Gastrocnemius medialis (tissue), 4 donors: ENCODE measurements at regions of chr5 and their contacts with region 1.

Region 1: GRCh38 chr5:172770675-172771438 is at the start of gene DUSP1:
- DNase-seq: peak; percentile 99
- ATAC-seq: peak; percentile 34 to 42
- H3K4me3 ChIP-seq: peak within 1 kb of the TSS; percentile 66 to 98 (median 83)
- H3K27ac ChIP-seq: peak within 1 kb of the TSS; percentile 96 to 99 (median 96)
- H3K4me1 ChIP-seq: peaks cover 39 to 42% of the 10 kb centered on the region in 2 donors
- H3K27me3 ChIP-seq: no peaks in the 10 kb centered on the region
- CTCF ChIP-seq: peak; percentile 32 to 77 (median 40)
- POLR2A ChIP-seq: peak in 1 of 2 donors; percentile 100
- total RNA-seq, gene DUSP1: 345 to 1,004 (median 793) TPM

Region 2: GRCh38 chr5:172795318-172795977 is 24.6 kb after region 1 on chr5:
- in situ Hi-C with region 1: no loop called
- intact Hi-C with region 1: loop called (anchors 1 kb)
- DNase-seq: peak; percentile 94 to 96
- ATAC-seq: peak; percentile 78 to 88
- H3K4me3 ChIP-seq: peak overlapping the region in 2 of 4 donors; percentile 5 to 7
- H3K27ac ChIP-seq: peak overlapping the region; percentile 88 to 92 (median 90)
- H3K4me1 ChIP-seq: peaks cover 52 to 60% of the 10 kb centered on the region in 2 donors
- H3K27me3 ChIP-seq: no peaks in the 10 kb centered on the region
- CTCF ChIP-seq: peak in 3 of 5 experiments; percentile 26 to 39 (median 34)
- POLR2A ChIP-seq: peak in 1 of 2 donors; percentile 63

Region 3: DNA sequence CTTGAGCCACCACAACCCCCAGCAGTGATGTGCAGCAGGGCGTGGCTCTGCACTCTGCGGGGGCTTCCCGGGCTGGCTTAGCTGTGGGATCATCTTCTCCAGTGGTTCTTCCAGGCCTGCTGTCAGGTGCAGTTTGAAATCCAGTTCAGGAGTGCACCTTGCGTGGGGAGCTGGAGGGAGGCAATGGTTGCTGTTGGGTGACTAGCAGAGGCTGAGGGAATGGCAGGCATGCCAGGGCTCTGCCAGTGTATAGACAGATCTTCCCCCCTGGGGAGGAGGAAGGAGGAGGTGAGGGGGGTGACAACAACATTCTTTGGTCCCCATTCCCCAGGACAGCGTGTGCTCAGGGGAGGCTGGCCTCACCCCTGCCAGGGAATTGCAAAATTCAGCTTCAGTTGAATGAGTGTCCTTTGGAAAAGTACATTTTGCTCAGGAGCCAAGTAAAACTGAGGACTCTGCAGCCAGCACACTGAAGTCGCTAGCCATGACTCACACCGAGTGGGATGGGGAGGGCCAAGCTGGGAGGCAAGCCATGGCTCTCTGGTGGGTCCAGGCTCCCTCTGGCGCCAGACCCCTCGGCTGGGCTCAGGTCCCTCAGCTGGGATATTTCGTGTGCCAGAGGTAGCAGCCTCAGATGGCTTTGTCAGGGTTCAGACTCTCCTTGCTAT is 98.2 kb after region 1 on chr5:
- in situ Hi-C with region 1: loop called in 3 of 4 experiments (anchors 5 to 10 kb)
- intact Hi-C with region 1: loop called (anchors 1 kb)
- DNase-seq: peak; percentile 94 to 97
- ATAC-seq: peak; percentile 65 to 67
- H3K4me3 ChIP-seq: peak overlapping the region in 3 of 4 donors; percentile 6 to 23 (median 18)
- H3K27ac ChIP-seq: peak overlapping the region; percentile 85 to 98 (median 94)
- H3K4me1 ChIP-seq: peaks cover 93 to 95% of the 10 kb centered on the region in 2 donors
- H3K27me3 ChIP-seq: no peaks in the 10 kb centered on the region
- CTCF ChIP-seq: peak in 4 of 5 experiments; percentile 41 to 52 (median 45)
- POLR2A ChIP-seq: peak; percentile 9 to 68

Region 4: DNA sequence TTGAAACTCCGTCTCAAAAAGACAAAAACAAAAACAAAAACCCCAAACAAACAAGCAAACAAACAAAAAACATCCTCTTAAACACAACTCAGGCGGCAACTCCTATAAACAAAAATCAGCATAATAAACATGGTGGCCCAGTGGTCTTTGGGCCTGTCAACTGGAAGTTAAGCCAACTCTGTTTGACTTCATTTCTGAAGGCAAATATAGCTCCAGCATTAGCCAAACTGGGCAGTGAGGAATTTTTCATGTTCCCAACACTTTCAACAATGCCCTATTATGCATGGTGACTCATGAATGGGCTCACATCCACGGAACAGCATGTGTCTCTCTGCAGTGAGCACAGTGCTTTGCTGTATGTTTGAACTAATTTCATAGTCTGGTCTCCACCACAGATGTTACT is 701.3 kb after region 1 on chr5:
- in situ Hi-C with region 1: no loop called
- intact Hi-C with region 1: loop called (anchors 10 kb)
- DNase-seq: peak; percentile 81
- ATAC-seq: peak; percentile 75 to 84
- H3K4me3 ChIP-seq: no peak overlapping the region
- H3K27ac ChIP-seq: peak overlapping the region; percentile 77 to 92 (median 82)
- H3K4me1 ChIP-seq: peaks cover 36 to 45% of the 10 kb centered on the region in 2 donors
- H3K27me3 ChIP-seq: no peaks in the 10 kb centered on the region
- CTCF ChIP-seq: no peak
- POLR2A ChIP-seq: peak in 1 of 2 donors; percentile 22

Region 5: GRCh38 chr5:173679909-173680630 is 909.2 kb after region 1 on chr5:
- in situ Hi-C with region 1: no loop called
- intact Hi-C with region 1: loop called (anchors 10 kb)
- DNase-seq: no peak
- ATAC-seq: no peak
- H3K4me3 ChIP-seq: no peak overlapping the region
- H3K27ac ChIP-seq: no peak overlapping the region
- H3K4me1 ChIP-seq: peaks cover 0 to 6% of the 10 kb centered on the region in 2 donors
- H3K27me3 ChIP-seq: no peaks in the 10 kb centered on the region
- CTCF ChIP-seq: no peak
- POLR2A ChIP-seq: no peak